ENCODE measurements at regions of chr9 and their contacts with region 1.

Region 1: DNA sequence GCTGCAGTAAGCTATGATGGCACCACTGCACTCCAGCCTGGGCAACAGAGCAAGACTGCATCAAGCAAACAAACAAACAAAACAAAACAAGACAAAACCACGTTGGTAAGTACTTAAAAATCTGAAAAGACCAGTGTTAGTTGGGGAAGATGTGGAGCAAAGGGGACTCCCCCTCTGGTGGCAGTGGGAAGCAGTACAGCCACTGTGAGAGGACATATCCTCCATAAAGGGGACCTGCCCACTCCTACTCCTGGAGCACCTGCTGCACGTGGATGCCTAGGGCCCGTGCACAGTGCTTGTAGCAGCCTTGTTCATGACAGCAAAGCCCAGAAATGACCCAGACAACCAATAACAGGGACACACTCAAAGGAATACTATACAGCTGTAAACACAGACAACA is 17.0 kb upstream of the IPPK start:
- DNase-seq: no peak
- ATAC-seq: no peak
- H3K4me3 Mint-ChIP-seq: no peak overlapping the region
- H3K27ac Mint-ChIP-seq: no peak overlapping the region
- H3K4me1 Mint-ChIP-seq: no peaks in the 10 kb centered on the region
- H3K27me3 Mint-ChIP-seq: no peaks in the 10 kb centered on the region

Region 2: GRCh38 chr9:92647671-92648473 is 39.1 kb before region 1 on chr9:
- CTCF ChIA-PET with region 1: no interaction called
- POLR2A ChIA-PET with region 1: no interaction called
- intact Hi-C with region 1: no loop called
- DNase-seq: no peak
- ATAC-seq: no peak
- H3K4me3 Mint-ChIP-seq: no peak overlapping the region
- H3K27ac Mint-ChIP-seq: no peak overlapping the region
- H3K4me1 Mint-ChIP-seq: peaks cover 9% of the 10 kb centered on the region
- H3K27me3 Mint-ChIP-seq: no peaks in the 10 kb centered on the region

Region 3: GRCh38 chr9:92664361-92665152 is 22.4 kb before region 1 on chr9:
- CTCF ChIA-PET with region 1: interaction called, 3 read pairs
- POLR2A ChIA-PET with region 1: interaction called, 14 read pairs
- intact Hi-C with region 1: no loop called
- DNase-seq: peak; percentile 62
- ATAC-seq: peak; percentile 76
- H3K4me3 Mint-ChIP-seq: no peak overlapping the region
- H3K27ac Mint-ChIP-seq: peak overlapping the region; percentile 84
- H3K4me1 Mint-ChIP-seq: peaks cover 50% of the 10 kb centered on the region
- H3K27me3 Mint-ChIP-seq: no peaks in the 10 kb centered on the region

Measured in activated CD4-positive, alpha-beta T cell treated with anti-CD3 and anti-CD28 coated beads for 36 hours (primary cell).